ENCODE measurements at regions of chr1 and their contacts with region 1.

Region 1: GRCh38 chr1:31663622-31664452 is 19.2 kb upstream of the PEF1 start:
- DNase-seq: peak in 9 of 10 donors; percentile 29 to 72 (median 56)
- ATAC-seq: peak; percentile 55 to 63
- H3K4me3 Mint-ChIP-seq: no peak overlapping the region
- H3K27ac Mint-ChIP-seq: peak overlapping the region in 1 of 10 donors; percentile 1
- H3K4me1 Mint-ChIP-seq: peaks cover 0 to 4% (median 0%) of the 10 kb centered on the region in 4 donors
- H3K27me3 Mint-ChIP-seq: peaks cover 0 to 6% (median 0%) of the 10 kb centered on the region in 5 donors

Region 2: GRCh38 chr1:31647106-31647505 is 16.7 kb before region 1 on chr1:
- POLR2A ChIA-PET with region 1: no interaction called
- DNase-seq: no peak
- ATAC-seq: no peak
- H3K4me3 Mint-ChIP-seq: peak overlapping the region in 9 of 10 donors; percentile 3 to 100 (median 67)
- H3K27ac Mint-ChIP-seq: peak overlapping the region in 5 of 10 donors; percentile 5 to 80 (median 70)
- H3K4me1 Mint-ChIP-seq: peaks cover 14 to 44% (median 35%) of the 10 kb centered on the region in 4 donors
- H3K27me3 Mint-ChIP-seq: no peaks in the 10 kb centered on the region

Region 3: DNA sequence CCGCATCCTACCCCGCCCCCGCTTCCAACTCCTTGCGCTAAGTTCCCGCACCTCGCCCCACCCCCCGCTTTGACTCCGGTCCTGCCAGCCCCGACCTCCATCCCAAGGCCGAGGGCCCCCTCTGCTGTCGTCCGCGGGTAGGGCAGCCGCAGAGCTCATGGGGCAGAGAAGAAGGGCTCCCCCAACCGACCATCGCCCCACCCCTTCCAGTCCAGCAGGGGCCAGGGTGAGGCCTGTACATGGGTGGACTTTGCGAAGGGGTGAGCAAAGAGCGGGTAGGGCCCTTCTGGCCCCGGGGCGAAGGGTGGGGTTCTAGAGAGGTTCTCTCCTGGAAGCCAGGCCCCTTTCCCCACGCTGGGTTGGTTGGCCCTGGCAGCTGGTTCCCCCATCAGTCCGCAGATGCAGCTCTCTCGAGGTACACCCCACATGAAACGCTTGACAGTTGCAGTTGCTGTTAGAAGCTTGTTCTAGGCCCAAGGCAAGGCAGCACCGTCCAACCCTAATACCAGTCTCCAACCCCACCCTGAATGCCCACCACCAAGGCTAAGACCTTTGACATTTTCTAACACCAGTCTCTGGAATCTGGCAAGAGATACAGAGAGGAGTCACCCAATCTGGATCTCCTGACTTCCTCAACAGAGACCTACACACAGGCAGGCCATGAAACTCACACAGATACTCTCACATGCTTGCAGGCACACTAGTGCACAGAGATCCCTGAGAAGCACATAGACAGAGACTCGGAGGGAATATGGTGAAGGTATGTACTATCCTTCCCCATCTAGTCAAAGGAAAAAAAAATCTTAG is 125.6 kb after region 1 on chr1:
- POLR2A ChIA-PET with region 1: interaction called, 20 read pairs
- DNase-seq: peak; percentile 88 to 97 (median 93)
- ATAC-seq: peak; percentile 75 to 78
- H3K4me3 Mint-ChIP-seq: peak overlapping the region; percentile 84 to 96 (median 92)
- H3K27ac Mint-ChIP-seq: peak overlapping the region in 9 of 10 donors; percentile 21 to 98 (median 94)
- H3K4me1 Mint-ChIP-seq: peaks cover 11 to 27% (median 20%) of the 10 kb centered on the region in 4 donors
- H3K27me3 Mint-ChIP-seq: no peaks in the 10 kb centered on the region

Measured in naive thymus-derived CD8-positive, alpha-beta T cell (primary cell).